ENCODE measurements at regions of chr2 and their contacts with region 1.

Region 1: DNA sequence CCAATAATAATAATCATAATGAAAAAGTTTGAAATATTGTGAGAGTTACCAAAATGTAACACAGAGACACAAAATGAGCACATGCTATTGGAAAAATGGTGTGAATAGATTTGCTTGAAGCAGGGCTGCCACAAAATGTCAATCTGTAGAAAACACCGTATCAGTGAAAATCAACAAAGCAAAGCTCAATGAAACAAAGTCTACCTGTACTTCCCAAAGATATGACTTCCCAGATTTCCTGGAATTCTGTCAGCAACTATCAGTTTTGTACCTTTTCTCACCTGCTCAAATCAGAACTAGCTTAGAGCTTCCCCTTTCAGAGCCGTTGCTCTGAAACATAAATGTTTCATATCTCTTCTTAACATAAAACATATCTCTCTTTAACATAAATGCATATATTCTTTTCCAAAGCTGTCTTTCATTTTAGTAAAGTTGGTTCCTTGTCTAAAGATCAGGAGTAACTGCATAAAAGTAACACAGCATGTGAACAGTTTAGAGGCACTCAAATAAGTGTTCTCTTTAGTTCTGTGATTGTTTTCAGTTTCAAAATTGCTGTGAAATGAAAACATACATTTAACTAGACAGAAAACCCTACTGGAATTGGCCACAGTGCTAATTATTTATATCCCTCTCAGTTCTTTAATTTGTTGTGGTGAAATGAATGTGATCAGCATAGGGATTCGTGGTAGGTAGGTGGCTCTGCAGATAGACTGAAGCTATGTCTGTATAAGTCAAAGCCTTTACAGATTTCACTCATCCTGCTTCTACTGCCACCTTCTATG is 262.5 kb downstream of the KCNJ3 start:
- DNase-seq: no peak
- H3K4me3 ChIP-seq: no peak overlapping the region
- H3K27ac ChIP-seq: no peak overlapping the region
- H3K4me1 ChIP-seq: peaks cover 19% of the 10 kb centered on the region
- H3K27me3 ChIP-seq: no peaks in the 10 kb centered on the region
- CTCF ChIP-seq: no peak
- POLR2A ChIP-seq: no peak

Region 2: DNA sequence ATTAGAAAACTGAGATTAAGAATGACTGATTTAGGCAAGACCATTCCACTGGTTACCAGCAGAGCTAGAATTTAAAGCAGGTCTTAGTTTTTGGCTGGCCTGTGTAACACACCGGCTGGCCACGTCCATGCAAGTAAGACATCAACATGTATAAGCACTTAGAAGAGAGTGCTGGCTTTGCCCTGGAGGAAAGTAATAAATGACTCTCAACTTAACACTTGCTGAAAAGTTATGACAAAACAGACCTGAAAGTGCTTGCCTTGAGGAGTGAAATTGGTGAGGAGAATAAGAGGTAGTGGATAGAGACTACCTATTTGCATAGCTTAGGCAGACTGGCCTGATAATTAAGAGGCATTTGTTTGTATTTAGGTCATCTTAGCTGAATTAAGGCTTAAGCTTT is 428.2 kb before region 1 on chr2:
- CTCF ChIA-PET with region 1: no interaction called
- POLR2A ChIA-PET with region 1: no interaction called
- dilution Hi-C with region 1: no loop called
- intact Hi-C with region 1: loop called (anchors 1 kb)
- DNase-seq: no peak
- H3K4me3 ChIP-seq: no peak overlapping the region
- H3K27ac ChIP-seq: no peak overlapping the region
- H3K4me1 ChIP-seq: no peaks in the 10 kb centered on the region
- H3K27me3 ChIP-seq: no peaks in the 10 kb centered on the region
- CTCF ChIP-seq: no peak
- POLR2A ChIP-seq: no peak

Region 3: DNA sequence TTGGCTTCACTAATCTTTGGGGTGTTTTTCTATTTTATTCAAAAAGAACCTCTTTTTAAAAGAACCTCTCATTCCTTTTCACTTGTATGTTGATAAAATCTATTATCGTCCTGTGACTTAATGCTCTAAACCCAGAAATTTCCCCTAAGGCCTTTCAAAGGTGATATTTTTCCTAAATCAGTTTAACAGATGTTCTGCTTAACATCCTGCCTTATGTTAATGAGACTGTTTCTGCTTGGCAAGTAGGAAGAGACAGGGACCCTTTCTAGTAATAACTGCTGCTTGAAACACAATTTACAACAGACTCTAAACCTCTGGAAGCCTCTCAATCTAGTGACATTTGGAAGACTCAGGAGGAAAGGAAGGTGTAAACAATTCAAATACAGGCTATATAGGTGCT is 133.7 kb before region 1 on chr2:
- CTCF ChIA-PET with region 1: no interaction called
- POLR2A ChIA-PET with region 1: no interaction called
- dilution Hi-C with region 1: no loop called
- intact Hi-C with region 1: no loop called
- DNase-seq: no peak
- H3K4me3 ChIP-seq: no peak overlapping the region
- H3K27ac ChIP-seq: no peak overlapping the region
- H3K4me1 ChIP-seq: no peaks in the 10 kb centered on the region
- H3K27me3 ChIP-seq: no peaks in the 10 kb centered on the region
- CTCF ChIP-seq: no peak
- POLR2A ChIP-seq: no peak

Region 4: DNA sequence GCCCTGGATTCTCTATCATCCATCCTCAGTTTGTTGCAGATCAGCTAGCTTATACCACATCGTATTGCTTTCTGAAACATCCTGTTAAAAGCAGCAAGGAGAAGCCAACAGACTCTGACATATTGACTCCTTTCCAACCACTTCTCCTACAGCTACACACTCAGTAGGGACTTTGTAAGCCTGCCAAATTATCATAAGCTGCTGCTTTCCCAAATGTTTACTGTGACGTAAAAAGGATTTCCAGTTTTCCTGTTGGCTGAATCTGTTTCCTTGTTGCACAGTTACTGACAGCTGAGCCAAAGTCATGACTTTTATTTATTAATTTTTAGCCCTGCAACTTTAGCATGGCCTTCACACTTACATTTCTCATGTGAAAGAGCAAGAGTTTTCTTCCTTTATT is 31.8 kb after region 1 on chr2:
- CTCF ChIA-PET with region 1: interaction called, 3 read pairs
- POLR2A ChIA-PET with region 1: no interaction called
- dilution Hi-C with region 1: no loop called
- intact Hi-C with region 1: loop called (anchors 1 kb)
- DNase-seq: peak; percentile 72
- H3K4me3 ChIP-seq: no peak overlapping the region
- H3K27ac ChIP-seq: no peak overlapping the region
- H3K4me1 ChIP-seq: no peaks in the 10 kb centered on the region
- H3K27me3 ChIP-seq: no peaks in the 10 kb centered on the region
- CTCF ChIP-seq: no peak
- POLR2A ChIP-seq: no peak

Region 5: GRCh38 chr2:155223781-155224406 is 262.9 kb after region 1 on chr2:
- CTCF ChIA-PET with region 1: no interaction called
- POLR2A ChIA-PET with region 1: no interaction called
- dilution Hi-C with region 1: no loop called
- intact Hi-C with region 1: loop called (anchors 10 kb)
- DNase-seq: peak; percentile 37
- H3K4me3 ChIP-seq: no peak overlapping the region
- H3K27ac ChIP-seq: no peak overlapping the region
- H3K4me1 ChIP-seq: no peaks in the 10 kb centered on the region
- H3K27me3 ChIP-seq: no peaks in the 10 kb centered on the region
- CTCF ChIP-seq: peak; percentile 6 to 10
- POLR2A ChIP-seq: no peak

Measured in endothelial cell of umbilical vein (primary cell).